Right ventricle myocardium inferior (tissue), 1 donor: ENCODE measurements at regions of chr1 and their contacts with region 1.

Region 1: DNA sequence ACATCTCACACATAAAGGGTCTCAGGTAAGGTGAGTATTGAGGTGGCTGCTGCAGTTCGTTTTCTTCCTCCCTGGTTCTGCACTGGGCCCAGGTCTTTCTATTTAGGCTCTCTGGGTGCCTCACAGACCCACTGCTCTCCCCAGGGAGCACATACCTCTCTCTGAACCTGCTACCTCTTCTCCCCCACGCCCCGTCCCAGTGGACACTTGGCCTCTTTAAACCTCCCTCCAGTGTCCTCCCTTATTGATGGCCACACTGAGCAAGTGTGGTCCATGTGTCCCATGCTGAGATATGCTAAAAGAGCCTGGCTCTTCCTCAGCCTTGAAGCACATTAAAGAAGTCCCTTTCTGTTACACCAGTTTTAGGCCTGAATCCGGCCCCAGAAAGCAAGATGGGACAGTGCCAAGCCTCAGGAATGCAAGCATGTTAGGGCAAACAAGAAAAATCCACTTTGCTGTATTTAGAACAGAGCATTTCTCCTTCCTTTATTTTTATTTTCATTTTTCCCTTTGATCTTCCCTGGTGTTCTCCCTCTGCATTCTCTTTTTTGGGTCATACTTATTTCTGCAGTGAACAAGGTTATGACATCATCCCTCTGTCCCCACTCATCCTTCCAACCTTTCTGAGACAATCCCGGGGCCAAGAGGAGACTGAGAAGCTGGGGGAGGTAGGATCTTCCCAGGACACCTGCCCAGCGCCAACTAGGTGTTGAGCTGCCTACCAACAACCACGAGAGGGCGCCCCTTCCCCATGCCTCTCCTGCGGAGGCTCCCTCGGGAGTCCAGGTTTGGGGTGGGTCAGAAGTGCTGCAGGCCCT is 5.0 kb upstream of the CHI3L2 start:
- DNase-seq: peak; percentile 86
- ATAC-seq: peak; percentile 76

Region 2: DNA sequence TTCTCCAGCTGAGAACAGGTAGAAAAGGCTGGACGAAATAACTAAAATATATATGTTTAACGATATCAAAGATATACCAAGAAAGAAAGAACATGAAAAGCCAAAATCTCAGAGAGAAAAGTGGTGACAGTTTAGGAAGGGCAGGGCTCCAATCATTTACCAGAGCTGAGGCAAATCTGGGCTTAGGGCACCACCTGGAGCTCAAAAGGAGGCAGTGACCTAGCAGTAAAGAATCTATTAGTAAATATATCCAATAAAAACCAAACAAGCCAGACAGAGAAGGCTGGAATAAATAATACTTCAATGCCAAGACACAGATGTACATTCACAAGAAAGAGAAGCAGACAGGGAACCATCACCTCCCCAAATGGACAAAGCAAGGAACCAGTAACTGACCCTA is 111.7 kb after region 1 on chr1:
- intact Hi-C with region 1: loop called (anchors 5 kb)
- DNase-seq: no peak
- ATAC-seq: peak; percentile 79

Region 3: DNA sequence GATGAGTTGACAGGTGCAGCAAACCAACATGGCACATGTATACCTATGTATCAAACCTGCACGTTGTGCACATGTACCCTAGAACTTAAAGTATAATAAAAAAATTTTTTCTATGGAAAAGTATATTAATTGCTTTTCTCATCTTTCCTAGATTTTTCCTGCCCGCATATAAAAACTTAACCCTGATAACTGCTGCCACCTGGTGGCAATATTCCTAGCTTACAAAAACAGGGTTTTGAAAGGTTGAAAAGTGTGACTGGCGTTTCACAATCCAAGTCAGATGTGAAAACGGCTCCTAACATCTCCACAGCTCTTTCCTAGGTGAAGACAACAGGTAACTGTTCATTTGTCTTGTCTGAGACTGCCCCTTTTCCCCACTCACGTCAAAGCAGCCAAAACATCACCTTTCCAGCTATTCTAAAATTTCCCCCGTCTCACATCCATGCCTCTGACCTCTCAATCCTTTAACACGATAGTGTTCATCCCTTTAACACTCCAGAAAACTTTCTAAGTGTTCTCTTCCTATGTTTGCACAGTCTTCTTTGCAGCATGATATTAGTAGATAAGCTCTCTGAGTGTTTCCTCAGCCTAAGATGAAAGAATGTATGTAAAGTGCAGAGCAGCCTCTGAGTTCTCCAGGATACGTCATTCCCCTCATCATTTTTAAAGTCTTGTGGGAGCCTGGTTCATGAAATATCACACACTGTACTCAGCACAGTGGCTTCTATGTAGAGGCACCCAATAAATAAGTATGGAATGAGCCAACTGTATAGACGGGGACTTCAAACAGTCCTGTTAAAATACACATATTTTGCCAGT is 177.5 kb after region 1 on chr1:
- intact Hi-C with region 1: loop called (anchors 1 kb)
- DNase-seq: no peak
- ATAC-seq: no peak

Region 4: GRCh38 chr1:111672331-111672730 is 449.8 kb after region 1 on chr1:
- intact Hi-C with region 1: no loop called
- DNase-seq: no peak
- ATAC-seq: peak; percentile 48